Heart right ventricle (tissue), 16 donors: ENCODE measurements at regions of chr15 and their contacts with region 1.

Region 1: GRCh38 chr15:90221246-90221900 is 12.4 kb downstream of the CIB1 start:
- DNase-seq: peak; percentile 76 to 77
- ATAC-seq: peak; percentile 73 to 87 (median 85)
- H3K4me3 ChIP-seq: no peak overlapping the region
- H3K27ac ChIP-seq: peak overlapping the region in 8 of 10 donors; percentile 20 to 66 (median 51)
- H3K4me1 ChIP-seq: peaks cover 2 to 14% (median 9%) of the 10 kb centered on the region in 9 donors
- H3K27me3 ChIP-seq: no peaks in the 10 kb centered on the region
- CTCF ChIP-seq: peak; percentile 52 to 82 (median 75)

Region 2: GRCh38 chr15:89893696-89894455 is 327.5 kb before region 1 on chr15 and contains the start of gene AP3S2:
- intact Hi-C with region 1: loop called in 2 of 10 experiments (anchors 10 kb)
- DNase-seq: peak; percentile 88 to 92
- ATAC-seq: peak; percentile 98 to 99 (median 99)
- H3K4me3 ChIP-seq: peak within 1 kb of the TSS; percentile 57 to 95 (median 82)
- H3K27ac ChIP-seq: peak within 1 kb of the TSS; percentile 57 to 96 (median 90)
- H3K4me1 ChIP-seq: peaks cover 0 to 42% (median 19%) of the 10 kb centered on the region in 9 donors
- H3K27me3 ChIP-seq: no peaks in the 10 kb centered on the region
- CTCF ChIP-seq: peak in 1 of 9 donors; percentile 16
- total RNA-seq, gene AP3S2: 37.0 to 55.5 (median 46.1) TPM

Region 3: DNA sequence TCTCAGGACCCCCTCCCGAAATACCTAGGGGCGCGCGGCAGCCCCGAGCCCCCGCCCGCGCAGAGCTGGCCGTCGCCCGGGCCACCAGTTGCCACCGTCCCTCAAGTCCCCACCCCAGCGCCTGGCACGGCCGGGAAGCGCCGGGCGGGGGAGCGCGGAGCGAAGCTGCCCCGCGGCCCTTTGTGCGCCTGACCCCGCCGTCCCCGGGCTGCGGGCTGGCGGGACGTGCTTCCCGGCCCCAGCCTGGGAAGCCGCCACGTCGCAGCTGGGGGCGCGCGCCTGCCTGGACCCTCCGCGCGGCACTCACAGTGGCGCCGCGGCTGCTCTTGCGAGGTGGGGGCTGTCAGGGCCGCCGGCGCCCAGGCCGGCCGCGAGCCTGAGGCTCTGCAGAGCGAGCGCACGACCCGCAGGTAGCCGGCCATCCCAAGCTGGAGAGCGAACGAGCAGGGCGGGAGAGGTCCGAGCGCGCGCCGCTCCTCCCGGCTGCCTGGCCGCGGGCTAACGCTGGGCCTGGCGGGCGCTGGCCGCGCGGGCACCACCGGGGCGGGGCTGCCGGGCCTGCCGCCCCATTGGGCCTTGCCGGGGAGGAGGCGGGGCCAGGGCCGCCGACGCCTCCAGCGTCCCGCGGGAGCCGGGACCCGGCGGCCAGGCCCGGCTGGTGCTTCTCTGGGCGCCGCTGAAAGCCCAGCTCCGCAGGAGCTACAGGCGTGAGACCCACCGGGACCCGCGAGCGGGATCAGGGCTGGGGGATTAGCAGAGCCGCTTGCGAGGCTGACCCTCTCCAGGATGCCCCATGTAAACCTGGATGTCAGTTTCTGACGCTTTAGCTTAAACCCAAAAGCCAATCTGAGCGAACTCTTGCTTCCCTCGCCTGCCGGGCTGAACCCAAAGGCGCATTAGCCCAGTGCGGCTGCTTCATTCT is 119.1 kb before region 1 on chr15 and contains the start of gene IDH2:
- intact Hi-C with region 1: loop called in 1 of 10 experiments (anchors 10 kb)
- DNase-seq: peak; percentile 75 to 86
- ATAC-seq: peak; percentile 75 to 94 (median 82)
- H3K4me3 ChIP-seq: peak within 1 kb of the TSS; percentile 64 to 100 (median 93)
- H3K27ac ChIP-seq: peak within 1 kb of the TSS; percentile 97 to 100 (median 99)
- H3K4me1 ChIP-seq: peaks cover 5 to 80% (median 50%) of the 10 kb centered on the region in 9 donors
- H3K27me3 ChIP-seq: no peaks in the 10 kb centered on the region
- CTCF ChIP-seq: peak in 1 of 9 donors; percentile 4
- total RNA-seq, gene IDH2: 731 to 1,135 (median 971) TPM

Region 4: DNA sequence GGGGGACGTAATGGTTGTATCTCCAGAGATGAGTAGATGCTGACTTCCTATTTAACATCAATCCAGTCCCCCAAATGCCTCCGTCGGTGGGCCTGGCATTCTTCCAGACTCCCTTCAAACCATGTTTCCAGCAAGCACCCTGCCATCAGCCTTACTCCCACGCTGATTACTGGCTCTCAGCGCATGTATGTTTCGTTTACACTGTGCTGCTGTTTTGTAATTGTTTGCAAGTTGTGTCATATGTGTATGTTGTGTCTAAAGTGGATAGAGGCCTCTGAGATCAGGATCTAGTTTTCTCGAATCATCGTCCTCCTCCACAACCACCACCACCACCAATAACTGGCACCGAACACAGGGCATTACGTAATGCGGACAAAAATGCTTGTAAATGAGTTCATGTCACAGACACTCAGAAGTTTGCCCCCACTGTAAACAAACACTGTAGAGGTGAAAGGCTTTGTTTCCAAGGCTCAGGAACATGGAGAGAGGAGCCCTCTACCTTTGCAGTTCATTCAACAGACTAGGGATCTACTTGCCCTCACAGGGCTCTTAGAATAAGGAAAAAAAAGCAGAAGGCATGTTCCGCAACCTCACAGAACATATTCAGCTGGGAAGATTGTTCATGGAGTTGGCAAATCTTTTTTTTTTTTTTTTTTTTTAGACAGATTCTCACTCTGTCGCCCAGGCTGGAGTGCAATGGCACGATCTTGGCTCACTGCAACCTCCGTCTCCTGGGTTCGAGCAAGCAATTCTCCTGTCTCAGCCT is 66.3 kb before region 1 on chr15:
- intact Hi-C with region 1: loop called in 1 of 10 experiments (anchors 2 kb)
- DNase-seq: no peak
- ATAC-seq: no peak
- H3K4me3 ChIP-seq: no peak overlapping the region
- H3K27ac ChIP-seq: no peak overlapping the region
- H3K4me1 ChIP-seq: peaks cover 0 to 30% (median 9%) of the 10 kb centered on the region in 9 donors
- H3K27me3 ChIP-seq: no peaks in the 10 kb centered on the region
- CTCF ChIP-seq: no peak

Region 5: GRCh38 chr15:90184786-90185569 is 36.4 kb before region 1 on chr15:
- intact Hi-C with region 1: loop called in 3 of 10 experiments (anchors 2 to 5 kb)
- DNase-seq: peak; percentile 61 to 83
- ATAC-seq: peak; percentile 83 to 93 (median 89)
- H3K4me3 ChIP-seq: peak overlapping the region; percentile 54 to 88 (median 70)
- H3K27ac ChIP-seq: peak overlapping the region; percentile 90 to 95 (median 92)
- H3K4me1 ChIP-seq: peaks cover 0 to 65% (median 15%) of the 10 kb centered on the region in 9 donors
- H3K27me3 ChIP-seq: peaks cover 0 to 4% (median 0%) of the 10 kb centered on the region in 7 donors
- CTCF ChIP-seq: peak in 1 of 9 donors; percentile 11

Region 6: DNA sequence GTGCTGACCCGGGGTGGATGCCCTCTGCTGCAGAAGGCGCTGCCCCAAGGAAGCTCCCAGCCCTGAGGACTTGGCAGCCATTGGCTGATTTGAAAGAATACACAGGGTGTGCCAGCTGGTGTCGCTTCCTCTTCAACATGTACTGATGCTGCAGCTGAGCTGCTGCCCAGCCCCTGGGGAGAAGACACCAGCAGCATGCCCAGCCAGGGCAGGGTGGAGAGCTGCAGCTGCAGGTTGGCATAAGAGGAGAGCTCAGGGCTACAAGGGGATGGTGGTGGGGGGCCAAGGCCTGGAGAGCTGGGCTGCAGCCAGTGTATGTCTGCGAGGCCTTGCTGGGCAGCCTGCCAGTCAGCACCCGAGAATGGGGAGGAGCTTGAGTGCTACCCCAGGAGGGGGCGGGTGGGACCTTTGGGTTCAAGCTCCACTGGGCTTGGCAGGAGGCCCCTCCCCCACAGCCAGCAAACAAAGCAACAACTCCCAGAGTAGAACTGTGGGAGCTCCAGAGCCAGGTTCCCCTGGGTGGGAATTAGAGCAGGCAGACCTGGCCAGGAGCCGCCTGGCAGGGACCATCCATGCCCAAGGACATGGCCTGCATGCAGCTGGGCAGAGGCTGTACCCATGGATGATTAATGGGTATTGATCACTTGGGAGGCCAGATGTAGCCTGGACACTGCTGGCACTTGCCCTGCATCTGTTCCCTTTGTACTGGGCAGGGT is 29.4 kb before region 1 on chr15:
- intact Hi-C with region 1: loop called in 1 of 10 experiments (anchors 5 kb)
- DNase-seq: peak; percentile 63 to 74
- ATAC-seq: peak; percentile 77 to 93 (median 81)
- H3K4me3 ChIP-seq: no peak overlapping the region
- H3K27ac ChIP-seq: peak overlapping the region; percentile 44 to 80 (median 60)
- H3K4me1 ChIP-seq: peaks cover 10 to 71% (median 27%) of the 10 kb centered on the region in 9 donors
- H3K27me3 ChIP-seq: no peaks in the 10 kb centered on the region
- CTCF ChIP-seq: no peak